ENCODE measurements at regions of chr11 and their contacts with region 1.

Region 1: DNA sequence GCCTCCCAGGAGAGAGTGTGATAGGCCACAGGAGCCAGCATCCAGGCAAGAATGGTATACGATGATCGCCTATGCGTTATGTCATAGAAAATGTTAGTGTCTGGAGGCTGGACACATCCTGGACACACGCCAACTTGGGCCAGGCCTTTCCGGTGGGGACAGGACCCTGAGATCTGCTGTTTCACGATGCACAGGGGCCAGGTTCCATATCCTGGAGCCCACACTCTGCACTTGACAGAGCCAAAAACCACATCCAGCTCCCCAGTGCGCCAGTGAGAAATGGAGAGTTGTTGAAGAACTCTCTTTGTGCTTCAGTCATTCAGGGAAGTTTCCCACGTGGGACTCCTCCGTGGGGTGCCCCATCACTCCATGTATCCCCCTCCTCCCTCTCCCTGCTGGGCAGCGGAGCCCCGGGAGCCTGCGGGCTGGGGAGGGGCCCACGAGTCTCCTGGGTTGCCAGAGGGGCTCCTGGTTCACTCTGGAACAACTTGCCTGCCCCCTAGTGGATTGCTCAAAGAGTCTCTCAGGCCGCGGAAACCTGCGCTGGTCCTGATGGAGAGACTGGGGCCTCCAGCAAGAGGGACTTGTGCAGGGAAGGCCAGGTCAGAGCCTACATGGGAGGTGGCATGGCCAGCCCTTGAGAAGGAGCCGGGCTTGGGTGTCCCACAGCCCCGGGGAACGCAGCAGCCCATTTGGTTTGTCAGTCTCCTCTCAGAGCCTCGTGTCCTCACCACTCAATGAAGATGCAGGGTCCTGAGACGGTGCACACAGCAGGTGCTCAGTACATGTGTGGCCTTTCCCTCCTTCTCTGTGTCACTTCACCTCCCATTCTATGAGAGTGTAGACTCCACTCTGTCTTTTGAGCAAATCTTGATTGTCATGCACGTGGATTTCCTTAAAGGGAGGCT is 10.2 kb upstream of the LRRC32 start:
- DNase-seq: peak; percentile 60
- ATAC-seq: peak; percentile 91
- H3K4me3 ChIP-seq: no peak overlapping the region; a peak in 1 of 6 replicates
- H3K27ac ChIP-seq: no peak overlapping the region
- H3K4me1 ChIP-seq: peaks cover 10% of the 10 kb centered on the region; the same call in 1 of the 2 replicates
- H3K27me3 ChIP-seq: peaks cover 9 to 37% of the 10 kb centered on the region in 2 experiments; a peak in 4 of 5 replicates
- CTCF ChIP-seq: peak; percentile 91
- EP300 ChIP-seq: no peak
- POLR2A ChIP-seq: no peak
- RAD21 ChIP-seq: peak; percentile 85

Region 2: DNA sequence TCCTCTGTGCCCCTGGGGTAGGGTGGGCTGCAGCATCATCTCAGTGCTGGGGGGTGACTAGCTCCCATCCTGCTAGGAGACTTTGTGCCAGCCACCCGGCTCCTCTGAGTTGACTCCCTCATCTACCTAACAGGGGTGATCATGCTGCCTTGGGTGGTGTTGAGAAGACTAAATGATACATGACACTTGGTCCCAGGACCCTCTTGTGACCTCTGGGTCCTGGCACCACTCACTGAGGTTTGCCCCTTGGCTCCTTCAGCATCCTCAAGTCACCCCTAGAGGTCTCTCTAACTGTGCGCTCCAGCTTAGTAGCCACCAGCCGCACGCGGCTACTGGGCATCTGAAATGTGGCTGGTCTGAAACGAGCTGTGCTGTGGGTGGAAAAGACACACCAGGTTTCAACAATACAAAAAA is 82.3 kb before region 1 on chr11:
- CTCF ChIA-PET with region 1: interaction called, 3 read pairs
- POLR2A ChIA-PET with region 1: no interaction called
- in situ Hi-C with region 1: no loop called
- intact Hi-C with region 1: loop called (anchors 5 kb)
- DNase-seq: peak; percentile 31
- ATAC-seq: peak; percentile 89
- H3K4me3 ChIP-seq: no peak overlapping the region
- H3K27ac ChIP-seq: no peak overlapping the region
- H3K4me1 ChIP-seq: no peaks in the 10 kb centered on the region
- H3K27me3 ChIP-seq: peaks cover 4 to 31% of the 10 kb centered on the region in 2 experiments; a peak in 4 of 5 replicates
- CTCF ChIP-seq: peak; percentile 56
- EP300 ChIP-seq: no peak
- POLR2A ChIP-seq: no peak
- RAD21 ChIP-seq: no peak

Region 3: GRCh38 chr11:76700177-76701100 is 19.7 kb after region 1 on chr11:
- CTCF ChIA-PET with region 1: no interaction called
- POLR2A ChIA-PET with region 1: no interaction called
- in situ Hi-C with region 1: no loop called
- intact Hi-C with region 1: no loop called
- DNase-seq: peak; percentile 15
- ATAC-seq: peak; percentile 30; the same call in 2 of the 3 replicates
- H3K4me3 ChIP-seq: no peak overlapping the region
- H3K27ac ChIP-seq: no peak overlapping the region
- H3K4me1 ChIP-seq: no peaks in the 10 kb centered on the region
- H3K27me3 ChIP-seq: peaks cover under 1 to 17% of the 10 kb centered on the region in 2 experiments; a peak in 3 of 5 replicates
- CTCF ChIP-seq: no peak
- EP300 ChIP-seq: no peak
- POLR2A ChIP-seq: no peak
- RAD21 ChIP-seq: no peak